K562 (cell line): ENCODE measurements at regions of chr7 and their contacts with region 1.

Region 1: DNA sequence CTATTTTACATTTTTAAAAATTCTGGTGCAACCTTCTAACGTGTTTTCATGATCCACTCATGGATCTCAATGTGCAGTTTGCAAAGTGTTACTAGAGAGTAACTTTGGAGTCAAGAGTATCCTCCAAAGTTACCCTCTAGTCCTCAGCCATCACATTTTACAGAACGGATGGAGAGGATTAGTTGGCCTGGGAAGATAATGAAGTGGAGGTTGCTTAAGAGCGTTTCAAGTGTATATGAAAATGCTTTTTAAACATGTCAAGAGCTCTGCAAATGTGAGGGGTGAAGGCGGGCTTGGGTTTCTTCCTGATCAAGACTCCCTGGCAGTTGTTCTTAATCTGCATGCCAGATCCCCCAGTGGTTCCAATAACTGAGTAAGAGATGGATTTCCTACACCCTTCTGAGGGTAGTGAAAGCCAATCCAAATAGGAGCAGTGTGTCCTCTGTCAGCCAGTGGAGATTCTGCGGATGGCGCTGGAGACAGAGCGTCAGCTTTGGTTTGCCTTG is 299.4 kb upstream of the NPVF start:
- DNase-seq: no peak
- ATAC-seq: no peak
- H3K4me3 ChIP-seq: no peak overlapping the region
- H3K27ac ChIP-seq: no peak overlapping the region
- H3K4me1 ChIP-seq: 0 out of 5 replicates have a peak, but pooled peaks cover 0 to 3% of the 10 kb centered on the region in 2 experiments
- H3K27me3 ChIP-seq: peaks cover 6 to 9% of the 10 kb centered on the region in 2 experiments; a peak in 3 of 5 replicates
- CTCF ChIP-seq: no peak
- EP300 ChIP-seq: no peak
- POLR2A ChIP-seq: no peak
- RAD21 ChIP-seq: no peak

Region 2: DNA sequence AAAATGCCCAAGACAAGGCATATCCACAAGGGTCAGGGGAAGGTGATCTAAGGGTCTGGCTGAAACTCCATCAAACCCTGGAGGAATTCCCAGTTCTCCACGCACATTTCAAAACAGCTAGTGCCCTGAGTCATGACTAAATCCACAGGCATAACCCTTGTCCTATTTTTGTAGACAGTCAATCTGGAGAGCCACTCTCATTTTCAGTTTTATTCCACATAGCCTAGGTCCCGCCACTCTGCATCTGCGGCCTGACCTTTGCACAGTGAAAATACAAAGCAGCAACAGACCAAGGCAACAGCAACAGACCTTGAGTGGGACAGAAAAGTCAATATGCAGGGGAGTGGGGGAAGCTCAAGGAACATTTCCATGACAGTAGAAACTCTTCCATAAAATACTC is 98.0 kb before region 1 on chr7:
- CTCF ChIA-PET with region 1: no interaction called
- POLR2A ChIA-PET with region 1: no interaction called
- in situ Hi-C with region 1: loop called (anchors 5 kb)
- intact Hi-C with region 1: no loop called
- DNase-seq: no peak
- ATAC-seq: no peak
- H3K4me3 ChIP-seq: no peak overlapping the region
- H3K27ac ChIP-seq: no peak overlapping the region
- H3K4me1 ChIP-seq: no peaks in the 10 kb centered on the region
- H3K27me3 ChIP-seq: peaks cover 14 to 22% of the 10 kb centered on the region in 2 experiments; a peak in 4 of 5 replicates
- CTCF ChIP-seq: no peak
- EP300 ChIP-seq: no peak
- POLR2A ChIP-seq: no peak
- RAD21 ChIP-seq: no peak

Region 3: GRCh38 chr7:25578991-25579777 is 51.5 kb after region 1 on chr7:
- CTCF ChIA-PET with region 1: no interaction called
- POLR2A ChIA-PET with region 1: no interaction called
- in situ Hi-C with region 1: no loop called
- intact Hi-C with region 1: no loop called
- DNase-seq: peak in 2 of 4 experiments; percentile 21 to 60
- ATAC-seq: 0 out of 3 replicates have a peak, but pooled peaks have one; percentile 23
- H3K4me3 ChIP-seq: no peak overlapping the region
- H3K27ac ChIP-seq: no peak overlapping the region
- H3K4me1 ChIP-seq: peaks cover 0 to 8% of the 10 kb centered on the region in 2 experiments; a peak in 1 of 5 replicates
- H3K27me3 ChIP-seq: peaks cover under 1 to 19% of the 10 kb centered on the region in 2 experiments; a peak in 3 of 5 replicates
- CTCF ChIP-seq: no peak
- EP300 ChIP-seq: peak; percentile 29; the same call in 1 of the 2 replicates
- POLR2A ChIP-seq: no peak
- RAD21 ChIP-seq: no peak